ENCODE measurements at regions of chr21 and their contacts with region 1.

Region 1: GRCh38 chr21:14479241-14479786 is 66.8 kb downstream of the SAMSN1 start:
- DNase-seq: no peak
- H3K4me3 Mint-ChIP-seq: no peak overlapping the region
- H3K27ac Mint-ChIP-seq: no peak overlapping the region
- H3K4me1 Mint-ChIP-seq: no peaks in the 10 kb centered on the region
- H3K27me3 Mint-ChIP-seq: no peaks in the 10 kb centered on the region
- CTCF ChIP-seq: no peak

Region 2: GRCh38 chr21:14523234-14523633 is 43.9 kb after region 1 on chr21:
- CTCF ChIA-PET with region 1: no interaction called
- intact Hi-C with region 1: no loop called
- DNase-seq: no peak
- H3K4me3 Mint-ChIP-seq: no peak overlapping the region
- H3K27ac Mint-ChIP-seq: no peak overlapping the region
- H3K4me1 Mint-ChIP-seq: no peaks in the 10 kb centered on the region
- H3K27me3 Mint-ChIP-seq: no peaks in the 10 kb centered on the region
- CTCF ChIP-seq: no peak

Region 3: GRCh38 chr21:14602382-14602958 is 123.2 kb after region 1 on chr21:
- CTCF ChIA-PET with region 1: no interaction called
- intact Hi-C with region 1: loop called (anchors 10 kb)
- DNase-seq: no peak
- H3K4me3 Mint-ChIP-seq: peak overlapping the region; percentile 29
- H3K27ac Mint-ChIP-seq: no peak overlapping the region
- H3K4me1 Mint-ChIP-seq: peaks cover 14% of the 10 kb centered on the region
- H3K27me3 Mint-ChIP-seq: no peaks in the 10 kb centered on the region
- CTCF ChIP-seq: no peak